Activated CD8-positive, alpha-beta memory T cell treated with anti-CD3 and anti-CD28 coated beads, Interleukin-2, amount 10 ng/mL, durations not matched to agents 7 days and 5 days (primary cell): ENCODE measurements at regions of chr13 and their contacts with region 1.

Region 1: DNA sequence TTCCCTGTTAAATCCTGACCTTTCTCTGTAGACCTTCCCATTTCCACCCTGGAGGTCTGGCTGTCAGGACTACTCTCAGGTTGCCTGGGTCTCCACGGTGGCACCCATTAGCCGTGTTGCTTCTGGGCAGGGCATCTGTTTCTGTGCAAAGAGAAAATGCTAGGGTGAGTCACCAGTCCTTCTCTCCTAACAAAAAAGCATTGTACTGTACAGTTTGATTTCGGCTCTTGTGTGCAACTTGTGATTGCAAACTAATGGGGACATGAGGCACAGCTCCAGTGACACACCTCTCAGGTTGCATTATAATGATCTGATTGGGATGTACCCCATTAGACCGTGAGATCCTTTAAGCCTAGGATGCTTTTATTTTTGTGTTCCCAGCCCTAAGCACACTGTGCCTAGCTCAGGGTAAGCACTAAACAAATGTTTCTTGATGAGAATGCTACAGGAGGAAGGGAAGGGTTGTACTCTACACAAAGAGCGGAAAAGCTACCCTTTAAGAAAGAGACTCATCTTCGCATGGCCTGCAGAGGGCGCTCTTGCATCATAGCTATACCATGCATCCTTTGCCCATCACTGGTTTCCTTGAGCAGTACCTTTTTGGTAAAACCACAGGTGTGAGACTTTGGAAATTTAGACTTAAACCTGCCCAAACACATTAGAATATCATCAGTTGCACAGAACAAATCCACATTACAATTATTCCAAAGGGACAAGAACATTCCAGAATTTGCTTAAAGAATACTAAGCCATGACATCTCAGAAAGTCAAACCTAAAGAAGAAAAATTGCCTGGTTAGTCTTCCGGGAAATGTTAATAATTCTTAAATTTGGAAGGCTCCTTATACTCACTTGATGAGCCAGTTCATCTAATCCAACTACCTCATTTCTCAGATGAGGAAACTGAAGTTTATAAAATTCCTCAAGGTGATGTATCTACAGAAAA is 20.3 kb upstream of the TRIM13 start:
- DNase-seq: peak; percentile 78
- ATAC-seq: peak; percentile 77
- H3K4me3 Mint-ChIP-seq: no peak overlapping the region
- H3K27ac Mint-ChIP-seq: no peak overlapping the region
- H3K4me1 Mint-ChIP-seq: peaks cover 2% of the 10 kb centered on the region
- H3K27me3 Mint-ChIP-seq: no peaks in the 10 kb centered on the region

Region 2: GRCh38 chr13:49908637-49909036 is 67.9 kb before region 1 on chr13:
- CTCF ChIA-PET with region 1: no interaction called
- DNase-seq: no peak
- ATAC-seq: no peak
- H3K4me3 Mint-ChIP-seq: no peak overlapping the region
- H3K27ac Mint-ChIP-seq: no peak overlapping the region
- H3K4me1 Mint-ChIP-seq: no peaks in the 10 kb centered on the region
- H3K27me3 Mint-ChIP-seq: no peaks in the 10 kb centered on the region

Region 3: DNA sequence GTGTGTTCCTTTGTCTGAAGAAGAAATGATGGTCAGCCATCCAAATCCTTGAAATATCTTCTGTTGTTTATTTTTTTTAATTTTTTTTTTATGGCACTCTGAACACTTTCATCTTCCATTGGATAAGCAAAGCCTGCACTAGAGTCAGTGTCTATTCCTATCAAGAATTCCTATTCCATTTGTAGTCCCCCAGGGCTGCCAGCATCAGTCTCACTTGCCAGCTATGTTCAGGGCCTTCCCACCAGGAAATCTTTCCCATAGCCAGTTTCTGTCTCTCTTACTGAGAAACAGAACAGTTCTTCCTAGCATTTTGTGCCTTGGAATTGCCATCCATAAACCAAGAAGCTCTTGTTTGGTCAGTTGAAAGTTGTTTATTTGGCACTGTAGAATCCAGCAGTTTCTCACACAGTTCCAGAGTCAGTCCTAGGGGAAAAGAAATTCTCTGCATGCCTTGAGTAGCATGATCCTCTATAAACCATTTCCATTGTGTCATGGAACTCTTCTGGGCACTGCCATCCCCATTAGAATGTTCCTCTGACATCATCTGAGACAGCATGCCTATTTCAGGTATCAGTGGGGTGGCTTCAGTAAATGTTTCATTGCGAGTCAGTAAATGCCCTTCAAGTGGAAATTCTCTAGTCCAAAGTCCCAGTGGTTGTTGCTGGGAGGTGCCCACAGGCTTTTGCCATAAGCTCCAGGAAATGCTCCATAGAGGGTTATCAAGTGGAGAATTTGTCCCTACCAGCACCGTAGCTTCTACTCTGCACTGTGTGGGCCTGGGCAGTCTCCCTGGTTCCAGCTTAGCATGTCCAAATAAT is 21.7 kb before region 1 on chr13:
- CTCF ChIA-PET with region 1: no interaction called
- DNase-seq: no peak
- ATAC-seq: no peak
- H3K4me3 Mint-ChIP-seq: no peak overlapping the region
- H3K27ac Mint-ChIP-seq: no peak overlapping the region
- H3K4me1 Mint-ChIP-seq: no peaks in the 10 kb centered on the region
- H3K27me3 Mint-ChIP-seq: peaks cover 4% of the 10 kb centered on the region

Region 4: DNA sequence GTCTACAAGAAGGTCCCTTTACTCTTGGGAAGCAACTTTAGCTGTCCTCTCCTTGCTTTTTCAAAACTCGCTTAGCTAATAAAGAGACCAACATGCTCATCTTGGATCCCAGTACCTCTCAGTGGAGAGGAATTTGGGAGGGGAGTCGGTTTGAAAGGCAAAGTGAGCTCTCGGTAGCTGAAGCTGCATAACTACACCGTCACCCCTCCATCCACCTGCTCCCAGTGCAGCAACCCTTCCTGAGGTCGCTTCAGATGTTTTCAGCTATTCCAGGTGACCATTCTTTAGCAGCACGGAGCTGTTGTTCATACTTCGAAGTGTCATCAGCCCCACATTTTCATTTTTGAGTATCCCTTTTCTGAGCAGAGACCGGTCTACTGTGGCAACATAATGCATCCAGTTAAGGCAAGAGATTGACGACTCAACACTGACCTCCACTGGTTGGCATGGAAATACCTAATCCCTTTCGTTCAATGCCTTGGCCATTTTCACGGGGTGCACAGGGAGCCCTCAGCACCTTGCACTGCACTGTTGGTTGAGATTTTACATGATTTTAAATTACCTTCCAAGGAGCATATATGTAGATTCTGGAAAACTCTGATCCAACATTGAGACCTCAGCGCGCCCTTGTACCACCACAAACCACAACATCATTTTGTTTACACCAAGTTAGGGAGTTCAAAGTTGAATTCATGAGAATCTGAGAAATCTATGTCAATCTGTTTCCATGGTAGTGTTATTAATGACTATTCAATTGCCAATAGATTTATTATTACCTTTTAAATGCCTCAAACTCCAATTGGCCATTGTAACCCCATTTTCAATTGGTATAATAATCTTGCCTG is 824.7 kb after region 1 on chr13:
- CTCF ChIA-PET with region 1: interaction called, 11 read pairs
- DNase-seq: peak; percentile 80
- ATAC-seq: peak; percentile 99
- H3K4me3 Mint-ChIP-seq: no peak overlapping the region
- H3K27ac Mint-ChIP-seq: peak overlapping the region; percentile 3
- H3K4me1 Mint-ChIP-seq: peaks cover 27% of the 10 kb centered on the region
- H3K27me3 Mint-ChIP-seq: peaks cover 4% of the 10 kb centered on the region